GM12878 (cell line): ENCODE measurements at regions of chr6 and their contacts with region 1.

Region 1: GRCh38 chr6:30037182-30037788 is 23.8 kb upstream of the POLR1H start:
- DNase-seq: no peak
- ATAC-seq: peak; percentile 90
- H3K4me3 ChIP-seq: no peak overlapping the region
- H3K27ac ChIP-seq: no peak overlapping the region
- H3K4me1 ChIP-seq: no peaks in the 10 kb centered on the region
- H3K27me3 ChIP-seq: no peaks in the 10 kb centered on the region
- CTCF ChIP-seq: peak; percentile 47 to 64 (median 56); a peak in 5 of 6 replicates
- EP300 ChIP-seq: no peak
- POLR2A ChIP-seq: no peak
- RAD21 ChIP-seq: peak; percentile 38

Region 2: DNA sequence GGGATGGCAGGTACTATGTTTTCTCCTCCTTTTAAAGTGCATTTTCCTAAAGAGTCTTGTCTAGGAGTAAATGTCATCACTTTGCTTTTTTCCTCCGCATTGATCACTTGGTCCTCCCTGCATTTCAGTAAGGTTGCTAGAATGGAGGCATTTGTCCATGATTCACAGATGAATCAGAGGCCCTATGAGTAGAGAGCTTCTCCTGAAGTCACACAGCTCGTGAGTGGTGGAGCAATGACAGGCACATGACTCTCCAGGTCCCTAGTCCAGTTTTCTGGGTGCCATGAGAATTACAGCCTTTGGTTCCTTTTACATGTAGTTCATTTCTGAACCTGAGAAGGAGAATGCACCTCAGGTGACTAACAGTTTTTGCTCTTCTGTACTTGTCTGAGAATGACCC is 44.5 kb before region 1 on chr6:
- CTCF ChIA-PET with region 1: no interaction called
- POLR2A ChIA-PET with region 1: no interaction called
- RAD21 ChIA-PET with region 1: no interaction called
- SMC1A ChIA-PET with region 1: no interaction called
- in situ Hi-C with region 1: no loop called
- intact Hi-C with region 1: no loop called
- DNase-seq: no peak
- ATAC-seq: no peak
- H3K4me3 ChIP-seq: no peak overlapping the region
- H3K27ac ChIP-seq: no peak overlapping the region
- H3K4me1 ChIP-seq: no peaks in the 10 kb centered on the region
- H3K27me3 ChIP-seq: no peaks in the 10 kb centered on the region; a peak in 1 of 4 replicates
- CTCF ChIP-seq: no peak
- EP300 ChIP-seq: no peak
- POLR2A ChIP-seq: no peak
- RAD21 ChIP-seq: no peak

Region 3: DNA sequence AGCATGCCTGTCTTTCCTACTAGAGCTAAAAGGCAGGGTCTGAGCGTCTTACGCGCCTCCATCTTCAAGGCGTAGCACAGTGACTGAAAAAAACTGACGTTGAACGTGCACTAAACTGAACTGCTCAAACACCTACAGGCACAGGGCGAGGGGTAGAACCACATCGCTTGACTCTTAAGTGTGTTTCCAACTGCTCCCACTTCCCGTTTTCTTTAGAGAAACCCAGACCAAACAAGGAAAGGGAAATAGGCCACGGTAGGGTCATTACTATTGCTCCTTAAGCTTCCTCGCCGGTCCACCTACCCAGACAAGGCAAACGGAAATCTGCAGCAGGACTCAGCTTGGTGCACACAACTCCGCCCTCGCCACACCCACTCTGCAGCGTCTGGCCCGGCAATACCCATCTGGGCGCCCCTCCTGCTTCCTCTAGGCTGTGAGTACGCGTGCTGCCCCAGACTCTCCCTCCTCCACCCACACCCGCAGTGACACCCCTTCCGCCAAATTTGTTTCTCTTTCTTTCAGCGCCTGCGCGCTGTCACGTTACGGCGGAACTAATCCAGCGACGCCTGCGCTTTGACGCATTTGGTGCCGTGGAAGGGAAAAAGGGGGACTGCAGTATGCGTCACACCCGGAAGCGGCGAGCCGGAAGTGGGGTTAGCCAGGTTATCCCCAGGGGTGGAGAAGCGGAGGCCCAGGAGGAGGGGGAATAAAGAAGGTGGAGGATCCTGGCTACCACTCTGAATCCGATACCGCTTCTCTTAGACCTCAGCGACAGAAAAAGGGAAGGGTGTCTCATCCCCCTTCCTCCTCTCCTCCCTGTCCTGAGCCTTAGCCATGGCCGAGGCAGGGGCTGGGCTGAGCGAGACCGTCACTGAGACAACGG is 29.5 kb after region 1 on chr6 and contains the start of gene PPP1R11:
- CTCF ChIA-PET with region 1: no interaction called
- POLR2A ChIA-PET with region 1: interaction called, 5 read pairs
- RAD21 ChIA-PET with region 1: interaction called, 3 read pairs
- SMC1A ChIA-PET with region 1: interaction called, 11 read pairs
- in situ Hi-C with region 1: no loop called
- intact Hi-C with region 1: no loop called
- DNase-seq: peak; percentile 99
- ATAC-seq: peak; percentile 99
- H3K4me3 ChIP-seq: peak within 1 kb of the TSS; percentile 84
- H3K27ac ChIP-seq: peak within 1 kb of the TSS; percentile 88
- H3K4me1 ChIP-seq: no peaks in the 10 kb centered on the region
- H3K27me3 ChIP-seq: peaks cover 0 to 3% of the 10 kb centered on the region in 2 experiments; a peak in 2 of 4 replicates
- CTCF ChIP-seq: no peak
- EP300 ChIP-seq: peak in 1 of 2 experiments; percentile 63; a peak in 2 of 4 replicates
- POLR2A ChIP-seq: peak; percentile 91
- RAD21 ChIP-seq: no peak
- polyA plus RNA-seq, gene PPP1R11: 12.6 to 13.4 TPM